GM23248 (cell line): ENCODE measurements at regions of chr14 and their contacts with region 1.

Region 1: GRCh38 chr14:64303471-64303917 is 9.3 kb upstream of the ESR2 start:
- DNase-seq: peak; percentile 62
- H3K4me3 ChIP-seq: no peak overlapping the region
- H3K27ac ChIP-seq: no peak overlapping the region
- H3K4me1 ChIP-seq: no peaks in the 10 kb centered on the region
- H3K27me3 ChIP-seq: peaks cover 2% of the 10 kb centered on the region; the same call in 1 of the 2 replicates

Region 2: GRCh38 chr14:62409626-62410300 is 1893.7 kb before region 1 on chr14:
- in situ Hi-C with region 1: no loop called
- DNase-seq: peak; percentile 28
- H3K4me3 ChIP-seq: no peak overlapping the region
- H3K27ac ChIP-seq: no peak overlapping the region
- H3K4me1 ChIP-seq: no peaks in the 10 kb centered on the region
- H3K27me3 ChIP-seq: no peaks in the 10 kb centered on the region

Region 3: GRCh38 chr14:63795532-63795931 is 508.0 kb before region 1 on chr14:
- in situ Hi-C with region 1: loop called (anchors 5 kb)
- DNase-seq: peak; percentile 16
- H3K4me3 ChIP-seq: no peak overlapping the region
- H3K27ac ChIP-seq: no peak overlapping the region
- H3K4me1 ChIP-seq: no peaks in the 10 kb centered on the region
- H3K27me3 ChIP-seq: peaks cover 4% of the 10 kb centered on the region; the same call in 1 of the 2 replicates